Endothelial cell of umbilical vein (primary cell): ENCODE measurements at regions of chr19 and their contacts with region 1.

Region 1: DNA sequence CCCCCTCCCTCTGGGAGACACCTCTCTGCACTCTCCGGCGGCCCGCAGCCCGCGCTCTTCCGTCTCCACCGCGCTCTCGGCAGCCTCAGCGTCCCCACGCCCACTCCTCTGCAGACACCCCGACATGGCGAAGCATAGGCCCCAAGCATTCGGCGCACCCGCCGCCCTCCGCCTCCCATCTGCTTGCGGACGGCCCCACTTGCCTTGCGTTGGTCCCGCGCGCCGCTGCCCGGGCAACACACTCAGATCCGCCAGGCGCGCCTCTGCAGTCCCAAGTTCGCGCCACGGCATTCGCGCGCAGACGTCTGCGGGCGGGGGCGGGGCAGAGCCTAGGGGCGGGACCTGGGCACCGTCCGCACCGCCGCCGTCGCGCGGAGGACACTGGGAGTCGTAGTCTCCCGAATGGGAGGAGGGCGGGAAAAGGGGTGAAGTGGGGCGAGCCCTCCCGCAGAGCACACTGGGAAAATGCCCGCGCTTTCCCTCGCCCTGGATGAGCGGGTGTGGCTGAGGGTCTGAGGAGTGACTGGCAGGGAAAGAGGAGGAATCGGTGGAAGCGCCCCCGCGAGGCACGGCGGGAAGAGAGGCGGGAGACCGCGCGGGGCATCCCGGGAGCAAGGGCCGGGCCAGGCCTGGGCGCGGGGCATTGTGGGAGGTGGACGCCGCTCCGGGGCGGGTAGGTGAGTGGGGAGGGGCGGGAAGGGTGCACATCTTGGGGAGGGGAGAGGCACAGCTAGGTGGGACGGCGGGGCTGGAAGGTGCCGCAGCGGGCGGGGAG is at the starts of genes LIG1 and ZSWIM9:
- DNase-seq: peak; percentile 97
- H3K4me3 ChIP-seq: peak within 1 kb of the TSS; percentile 69 to 88 (median 87)
- H3K27ac ChIP-seq: peak within 1 kb of the TSS; percentile 76
- H3K4me1 ChIP-seq: peaks cover 13% of the 10 kb centered on the region
- H3K27me3 ChIP-seq: no peaks in the 10 kb centered on the region
- CTCF ChIP-seq: peak in 1 of 2 donors; percentile 20
- POLR2A ChIP-seq: no peak
- total RNA-seq, gene LIG1: 94.7 and 100 TPM in 2 replicates
- total RNA-seq, gene ZSWIM9: 7.4 and 8.6 TPM in 2 replicates

Region 2: GRCh38 chr19:47663841-47664771 is 506.1 kb before region 1 on chr19:
- CTCF ChIA-PET with region 1: no interaction called
- POLR2A ChIA-PET with region 1: no interaction called
- dilution Hi-C with region 1: no loop called
- intact Hi-C with region 1: no loop called
- DNase-seq: no peak
- H3K4me3 ChIP-seq: no peak overlapping the region
- H3K27ac ChIP-seq: no peak overlapping the region
- H3K4me1 ChIP-seq: no peaks in the 10 kb centered on the region
- H3K27me3 ChIP-seq: no peaks in the 10 kb centered on the region
- CTCF ChIP-seq: no peak
- POLR2A ChIP-seq: no peak

Region 3: DNA sequence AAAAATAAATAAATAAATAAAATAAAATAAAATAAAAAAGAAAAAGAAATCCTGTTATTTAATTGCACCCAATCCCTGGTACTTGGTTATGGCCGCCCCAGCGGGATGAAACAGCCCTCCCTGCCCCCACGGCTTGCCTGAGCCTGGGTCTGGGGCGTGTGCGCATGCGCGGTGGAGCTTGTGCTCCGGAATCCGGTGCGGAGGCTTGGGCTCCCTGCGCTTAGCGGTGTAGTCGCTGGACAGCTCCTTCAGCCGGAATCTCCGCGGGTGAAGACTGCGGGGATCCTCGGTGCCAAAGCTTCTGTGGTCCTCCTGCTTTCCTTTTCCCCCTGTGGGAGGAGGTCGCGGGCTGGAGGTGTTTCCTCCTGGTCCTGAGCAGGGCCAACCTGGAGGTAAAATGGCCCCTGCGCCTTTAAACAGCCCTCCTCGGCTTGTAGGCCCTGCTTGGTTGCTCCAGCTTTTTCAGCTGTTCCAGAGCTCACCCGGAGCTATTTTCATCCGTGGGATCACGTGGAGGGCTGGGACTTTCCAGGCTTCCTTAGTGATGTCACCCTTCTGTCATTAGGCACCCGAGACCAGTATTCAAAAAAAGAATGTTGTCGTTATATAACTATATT is 59.8 kb before region 1 on chr19 and contains the start of gene PLA2G4C:
- CTCF ChIA-PET with region 1: no interaction called
- POLR2A ChIA-PET with region 1: no interaction called
- dilution Hi-C with region 1: no loop called
- intact Hi-C with region 1: loop called (anchors 1 kb)
- DNase-seq: peak; percentile 94
- H3K4me3 ChIP-seq: peak within 1 kb of the TSS in 2 of 3 experiments; percentile 25 to 71
- H3K27ac ChIP-seq: peak within 1 kb of the TSS; percentile 96
- H3K4me1 ChIP-seq: peaks cover 32% of the 10 kb centered on the region
- H3K27me3 ChIP-seq: no peaks in the 10 kb centered on the region
- CTCF ChIP-seq: no peak
- POLR2A ChIP-seq: peak; percentile 60
- total RNA-seq, gene PLA2G4C: 32.6 and 63.4 TPM in 2 replicates

Region 4: GRCh38 chr19:48123907-48124651 is 46.1 kb before region 1 on chr19:
- CTCF ChIA-PET with region 1: no interaction called
- POLR2A ChIA-PET with region 1: interaction called, 3 read pairs
- dilution Hi-C with region 1: no loop called
- intact Hi-C with region 1: loop called (anchors 1 kb)
- DNase-seq: peak; percentile 96
- H3K4me3 ChIP-seq: no peak overlapping the region
- H3K27ac ChIP-seq: peak overlapping the region; percentile 96
- H3K4me1 ChIP-seq: peaks cover 51% of the 10 kb centered on the region
- H3K27me3 ChIP-seq: no peaks in the 10 kb centered on the region
- CTCF ChIP-seq: peak; percentile 39 to 41
- POLR2A ChIP-seq: peak; percentile 58

Region 5: GRCh38 chr19:48152551-48152950 is 17.7 kb before region 1 on chr19:
- CTCF ChIA-PET with region 1: interaction called, 15 read pairs
- POLR2A ChIA-PET with region 1: interaction called, 4 read pairs
- dilution Hi-C with region 1: no loop called
- intact Hi-C with region 1: loop called (anchors 1 kb)
- DNase-seq: peak; percentile 98
- H3K4me3 ChIP-seq: no peak overlapping the region
- H3K27ac ChIP-seq: peak overlapping the region; percentile 94
- H3K4me1 ChIP-seq: peaks cover 15% of the 10 kb centered on the region
- H3K27me3 ChIP-seq: no peaks in the 10 kb centered on the region
- CTCF ChIP-seq: peak; percentile 65 to 67
- POLR2A ChIP-seq: peak; percentile 32

Region 6: GRCh38 chr19:48203732-48204628 is 33.8 kb after region 1 on chr19:
- CTCF ChIA-PET with region 1: interaction called, 3 read pairs
- POLR2A ChIA-PET with region 1: interaction called, 4 read pairs
- dilution Hi-C with region 1: no loop called
- intact Hi-C with region 1: loop called (anchors 1 kb)
- DNase-seq: peak; percentile 98
- H3K4me3 ChIP-seq: peak overlapping the region; percentile 35 to 90 (median 52)
- H3K27ac ChIP-seq: peak overlapping the region; percentile 64
- H3K4me1 ChIP-seq: peaks cover 21% of the 10 kb centered on the region
- H3K27me3 ChIP-seq: no peaks in the 10 kb centered on the region
- CTCF ChIP-seq: no peak
- POLR2A ChIP-seq: peak; percentile 38

Region 7: GRCh38 chr19:48249502-48250014 is 79.3 kb after region 1 on chr19:
- CTCF ChIA-PET with region 1: no interaction called
- POLR2A ChIA-PET with region 1: no interaction called
- dilution Hi-C with region 1: no loop called
- intact Hi-C with region 1: loop called (anchors 2 kb)
- DNase-seq: peak; percentile 97
- H3K4me3 ChIP-seq: peak overlapping the region; percentile 10 to 60 (median 51)
- H3K27ac ChIP-seq: peak overlapping the region; percentile 80
- H3K4me1 ChIP-seq: peaks cover 63% of the 10 kb centered on the region
- H3K27me3 ChIP-seq: no peaks in the 10 kb centered on the region
- CTCF ChIP-seq: no peak
- POLR2A ChIP-seq: peak; percentile 96

Region 8: GRCh38 chr19:48568345-48568886 is 398.2 kb after region 1 on chr19:
- CTCF ChIA-PET with region 1: no interaction called
- POLR2A ChIA-PET with region 1: no interaction called
- dilution Hi-C with region 1: no loop called
- intact Hi-C with region 1: loop called (anchors 5 kb)
- DNase-seq: peak; percentile 83
- H3K4me3 ChIP-seq: peak overlapping the region in 1 of 3 experiments; percentile 17
- H3K27ac ChIP-seq: no peak overlapping the region
- H3K4me1 ChIP-seq: peaks cover 2% of the 10 kb centered on the region
- H3K27me3 ChIP-seq: no peaks in the 10 kb centered on the region
- CTCF ChIP-seq: no peak
- POLR2A ChIP-seq: no peak